ENCODE measurements at regions of chr15 and their contacts with region 1.

Region 1: DNA sequence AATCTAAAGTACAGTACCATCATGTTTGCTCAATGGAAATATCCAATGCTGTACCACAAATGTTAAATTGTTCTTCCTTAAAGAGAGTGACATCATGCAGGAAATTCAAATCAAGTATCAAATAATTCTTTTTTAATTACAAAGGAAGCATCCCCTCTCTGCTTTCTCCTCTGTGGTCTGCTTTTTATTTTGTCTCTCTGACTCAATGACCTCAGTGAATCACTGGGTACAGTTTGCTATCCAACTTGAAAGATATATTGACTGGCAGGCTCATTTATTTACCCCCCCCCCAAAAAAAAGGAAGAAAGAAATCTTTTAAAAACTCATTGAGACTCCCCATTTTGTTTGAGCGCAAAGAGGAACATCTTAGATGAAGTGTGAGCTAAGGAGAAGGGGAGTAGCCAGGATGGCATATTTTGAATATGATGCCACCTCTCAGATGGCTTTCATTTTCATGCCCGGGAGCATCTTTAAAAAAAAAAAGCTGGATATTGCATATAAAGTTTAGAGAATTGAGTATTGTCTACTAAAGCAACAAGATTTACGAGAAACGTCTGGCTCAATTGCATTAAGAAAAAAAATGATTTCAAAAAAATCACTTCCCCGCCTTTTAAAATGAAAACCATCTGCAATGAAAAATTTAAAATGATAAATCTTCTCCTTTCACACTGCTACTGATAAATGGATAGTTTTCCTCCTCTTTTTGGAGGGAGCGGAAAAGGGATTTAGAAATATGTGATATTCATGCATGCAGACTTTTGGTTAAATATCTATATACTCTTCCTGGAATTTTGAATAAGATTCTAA is 307.1 kb upstream of the DPH6 start:
- DNase-seq: no peak
- ATAC-seq: no peak
- H3K4me3 Mint-ChIP-seq: no peak overlapping the region
- H3K27ac Mint-ChIP-seq: no peak overlapping the region
- H3K4me1 Mint-ChIP-seq: no peaks in the 10 kb centered on the region
- H3K27me3 Mint-ChIP-seq: no peaks in the 10 kb centered on the region
- CTCF ChIP-seq: no peak

Region 2: DNA sequence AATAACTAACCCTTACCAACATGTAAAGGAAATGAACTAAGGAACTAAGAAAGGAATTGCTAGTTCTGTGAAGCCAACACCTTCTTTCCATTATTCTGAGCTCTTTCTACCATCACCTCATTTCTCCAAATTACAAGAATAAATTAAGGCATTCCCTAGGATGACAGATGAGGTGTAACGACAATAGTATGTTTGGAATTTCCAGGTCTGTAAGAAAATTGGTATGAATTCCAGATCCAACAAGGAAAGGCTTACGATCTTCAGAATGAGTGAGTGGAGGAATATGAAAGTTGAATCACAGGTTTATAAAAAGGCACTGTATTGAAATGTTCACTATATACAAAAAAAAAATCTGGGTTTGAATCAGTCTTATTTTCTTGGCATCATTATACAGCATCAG is 763.5 kb before region 1 on chr15:
- CTCF ChIA-PET with region 1: no interaction called
- POLR2A ChIA-PET with region 1: no interaction called
- intact Hi-C with region 1: no loop called
- DNase-seq: no peak
- ATAC-seq: no peak
- H3K4me3 Mint-ChIP-seq: no peak overlapping the region
- H3K27ac Mint-ChIP-seq: no peak overlapping the region
- H3K4me1 Mint-ChIP-seq: no peaks in the 10 kb centered on the region
- H3K27me3 Mint-ChIP-seq: no peaks in the 10 kb centered on the region
- CTCF ChIP-seq: no peak

Region 3: DNA sequence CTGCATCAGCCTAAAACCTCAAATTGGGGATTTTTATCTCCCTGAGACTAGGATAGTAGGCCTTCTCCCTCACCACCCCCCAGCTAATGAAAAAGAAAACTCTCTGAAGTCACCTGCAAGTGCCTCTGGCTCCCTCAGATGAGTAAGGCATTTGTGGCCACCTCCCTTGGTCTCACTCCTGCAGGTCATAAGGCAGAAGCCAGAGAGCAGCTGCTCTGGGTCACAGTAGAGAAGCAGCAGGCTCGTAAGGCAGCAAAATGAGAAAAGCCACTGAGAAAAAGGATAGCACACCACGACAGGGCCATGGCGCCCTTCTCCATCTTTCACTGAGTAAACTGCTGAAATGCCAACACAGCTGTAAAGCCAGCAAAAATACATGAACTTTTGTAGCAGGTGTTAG is 10.4 kb before region 1 on chr15:
- CTCF ChIA-PET with region 1: no interaction called
- POLR2A ChIA-PET with region 1: interaction called, 10 read pairs
- intact Hi-C with region 1: no loop called
- DNase-seq: no peak
- ATAC-seq: no peak
- H3K4me3 Mint-ChIP-seq: no peak overlapping the region
- H3K27ac Mint-ChIP-seq: no peak overlapping the region
- H3K4me1 Mint-ChIP-seq: no peaks in the 10 kb centered on the region
- H3K27me3 Mint-ChIP-seq: no peaks in the 10 kb centered on the region
- CTCF ChIP-seq: no peak